ENCODE measurements at regions of chr15 and their contacts with region 1.

Region 1: DNA sequence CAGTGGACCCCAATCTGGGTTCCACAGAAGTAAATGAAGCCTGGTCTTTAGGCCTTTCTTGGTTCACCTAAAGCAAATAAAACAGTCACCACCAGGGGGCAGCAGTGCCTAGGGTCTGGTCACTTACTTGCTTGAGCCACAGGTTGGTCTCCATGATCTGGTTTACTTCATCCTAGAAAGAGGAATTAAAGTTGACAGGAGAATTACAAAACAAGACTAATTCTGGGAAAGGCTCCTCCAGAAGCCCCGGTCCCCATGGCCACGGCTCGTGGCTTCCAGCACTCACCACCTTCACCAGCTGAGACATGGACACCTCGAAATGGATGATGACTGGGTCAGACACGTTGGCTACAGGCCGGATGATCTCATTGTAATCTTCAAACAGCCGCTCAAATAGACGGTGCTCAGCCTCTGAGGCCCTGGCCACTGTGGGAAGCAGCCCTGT is 2.3 kb downstream of the CHRNA3 start:
- DNase-seq: peak; percentile 98
- H3K4me3 ChIP-seq: no peak overlapping the region
- H3K27ac ChIP-seq: no peak overlapping the region
- H3K4me1 ChIP-seq: peaks cover 12 to 29% (median 27%) of the 10 kb centered on the region in 4 donors
- H3K27me3 ChIP-seq: peaks cover 0 to 45% (median 26%) of the 10 kb centered on the region in 4 donors
- CTCF ChIP-seq: peak; percentile 82 to 89 (median 88)
- EP300 ChIP-seq: no peak
- POLR2A ChIP-seq: no peak

Region 2: GRCh38 chr15:78709263-78709882 is 90.9 kb after region 1 on chr15:
- intact Hi-C with region 1: loop called (anchors 2 kb)
- DNase-seq: peak; percentile 92
- H3K4me3 ChIP-seq: peak overlapping the region in 1 of 4 donors; percentile 37
- H3K27ac ChIP-seq: no peak overlapping the region
- H3K4me1 ChIP-seq: peaks cover 6 to 11% (median 9%) of the 10 kb centered on the region in 4 donors
- H3K27me3 ChIP-seq: peaks cover 0 to 24% (median 0%) of the 10 kb centered on the region in 4 donors
- CTCF ChIP-seq: peak; percentile 84 to 91 (median 87)
- EP300 ChIP-seq: no peak
- POLR2A ChIP-seq: no peak

Region 3: GRCh38 chr15:78750566-78750965 is 132.1 kb after region 1 on chr15:
- intact Hi-C with region 1: loop called (anchors 5 kb)
- DNase-seq: no peak
- H3K4me3 ChIP-seq: peak overlapping the region; percentile 18 to 42 (median 37)
- H3K27ac ChIP-seq: peak overlapping the region; percentile 46 to 56 (median 51)
- H3K4me1 ChIP-seq: peaks cover 8 to 17% (median 14%) of the 10 kb centered on the region in 4 donors
- H3K27me3 ChIP-seq: no peaks in the 10 kb centered on the region
- CTCF ChIP-seq: no peak
- EP300 ChIP-seq: no peak
- POLR2A ChIP-seq: no peak

Measured in esophagus muscularis mucosa (tissue), 4 donors.